ENCODE measurements at regions of chr1 and their contacts with region 1.

Region 1: DNA sequence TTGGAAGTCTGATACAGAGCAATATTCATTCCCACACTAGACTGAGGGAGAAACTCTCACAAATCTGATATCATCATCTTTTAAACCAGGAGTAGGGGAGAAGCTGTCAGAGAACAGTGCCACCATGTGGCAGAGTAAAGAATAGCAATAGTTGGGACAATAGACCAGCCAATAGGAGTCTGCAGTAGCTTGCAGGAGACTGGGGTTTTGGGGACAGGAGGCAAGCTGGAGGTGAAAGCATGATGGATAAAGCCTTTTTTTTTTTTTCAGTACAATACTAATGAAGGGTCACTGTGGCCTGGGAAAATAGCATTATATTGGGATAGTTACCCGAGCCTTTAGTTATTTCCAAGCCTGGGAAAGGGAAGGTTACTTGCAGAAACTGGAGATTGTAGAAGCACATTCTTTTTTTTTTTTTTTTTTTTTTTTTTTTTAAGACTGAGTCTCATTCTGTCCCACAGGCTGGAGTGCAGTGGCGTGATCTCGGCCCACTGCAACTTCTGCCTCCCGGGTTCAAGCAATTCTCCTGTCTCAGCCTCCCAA is 120.7 kb downstream of the S1PR1 start:
- DNase-seq: peak in 1 of 2 donors; percentile 36
- ATAC-seq: peak; percentile 80

Region 2: DNA sequence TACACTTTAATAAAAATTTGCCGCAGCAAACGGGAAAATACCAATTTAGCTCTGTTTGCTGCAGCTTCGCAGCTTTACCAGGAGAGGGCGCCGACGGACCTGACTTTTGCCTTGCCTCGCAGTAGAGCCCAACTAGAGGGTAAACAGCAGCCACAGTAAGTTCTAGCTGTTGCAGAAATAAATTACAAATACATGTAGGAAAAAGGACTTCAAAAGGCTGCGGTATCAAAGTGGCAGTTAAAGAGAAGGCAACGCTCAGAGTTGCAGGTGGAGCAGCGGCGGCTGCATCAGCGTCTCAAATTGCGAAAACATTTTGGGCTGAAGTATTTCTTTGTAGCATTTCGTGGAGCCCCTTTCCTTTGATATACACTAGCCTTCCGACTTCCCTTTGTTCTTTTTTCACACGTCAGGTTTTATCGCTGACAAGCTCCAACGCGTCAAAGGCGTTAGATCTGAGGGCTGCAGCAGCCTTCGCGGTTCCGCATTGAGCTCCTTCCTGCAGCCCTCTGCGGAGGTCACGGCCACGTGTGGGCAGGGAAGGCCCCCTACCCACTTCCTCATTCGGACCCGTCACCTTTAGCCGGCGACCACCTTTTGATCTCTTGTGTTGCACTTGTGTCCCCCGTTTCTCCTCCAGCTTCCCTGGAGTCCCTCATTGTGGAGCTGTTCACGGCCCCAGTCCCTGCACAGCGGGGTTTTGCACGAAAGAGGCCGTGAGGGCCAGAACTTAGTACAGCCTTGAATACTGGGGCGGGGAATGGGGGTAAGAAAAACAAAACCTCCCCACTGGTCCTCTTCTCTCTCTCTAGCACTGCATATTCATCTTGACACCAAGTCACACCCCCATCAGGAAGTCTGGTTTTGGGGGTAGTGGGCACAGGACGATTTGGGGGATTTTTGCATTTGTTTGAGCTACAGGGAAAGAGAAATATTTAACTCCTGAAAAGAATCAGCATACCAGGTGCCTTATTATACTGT is 47.9 kb before region 1 on chr1:
- intact Hi-C with region 1: loop called in 1 of 2 experiments (anchors 2 kb)
- DNase-seq: peak; percentile 28 to 47
- ATAC-seq: peak; percentile 74

Region 3: GRCh38 chr1:101506541-101507164 is 149.1 kb after region 1 on chr1:
- intact Hi-C with region 1: no loop called
- DNase-seq: peak in 1 of 2 donors; percentile 7
- ATAC-seq: peak; percentile 56

Measured in left colon (tissue), 2 donors.